ENCODE measurements at regions of chr1 and their contacts with region 1.

Region 1: DNA sequence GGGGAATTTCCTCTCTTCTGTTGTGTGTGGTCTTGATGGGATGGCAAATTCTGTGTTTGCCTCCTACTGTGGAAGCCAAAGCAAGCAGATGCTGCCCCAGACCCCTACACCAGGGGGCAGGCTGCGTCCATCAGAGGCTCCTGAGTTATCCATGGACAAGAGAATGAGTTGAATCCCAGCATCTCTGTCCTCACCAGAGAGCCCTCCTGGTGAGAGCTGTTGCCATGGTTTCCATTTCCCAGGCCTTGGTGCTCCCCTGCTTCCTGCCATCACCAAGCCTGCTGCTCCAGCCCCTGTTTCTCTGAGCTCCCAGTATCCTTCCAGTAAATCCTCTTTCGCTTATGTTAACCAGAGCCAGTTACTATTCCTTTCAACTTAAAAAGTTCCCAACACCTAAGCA is 20.4 kb upstream of the GNG12 start:
- DNase-seq: peak; percentile 54 to 59
- ATAC-seq: peak; percentile 58 to 86 (median 74)
- H3K4me3 ChIP-seq: no peak overlapping the region
- H3K27ac ChIP-seq: no peak overlapping the region
- H3K4me1 ChIP-seq: peaks cover 0 to 12% (median 9%) of the 10 kb centered on the region in 9 donors
- H3K27me3 ChIP-seq: no peaks in the 10 kb centered on the region
- CTCF ChIP-seq: peak; percentile 57 to 83 (median 76)

Region 2: DNA sequence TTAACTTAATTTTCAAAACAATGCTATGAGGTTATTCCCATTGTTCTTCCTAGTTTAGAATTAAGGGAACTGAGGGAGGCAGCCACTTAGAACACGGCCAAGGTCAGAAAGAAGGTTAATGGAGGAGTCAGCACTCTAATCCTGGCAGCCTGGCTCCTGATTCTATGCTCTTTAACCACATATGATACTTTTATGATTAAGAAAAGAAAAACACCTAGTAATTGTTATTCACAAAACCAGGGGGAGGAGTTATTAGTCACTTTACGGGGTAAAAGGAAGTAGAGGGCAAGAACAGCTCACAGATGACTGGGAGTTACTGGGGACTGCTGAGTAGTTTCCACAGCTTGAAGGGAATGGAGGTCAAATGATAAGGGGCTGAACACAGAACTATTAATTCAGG is 130.1 kb before region 1 on chr1:
- intact Hi-C with region 1: no loop called
- DNase-seq: peak in 1 of 2 donors; percentile 37
- ATAC-seq: peak; percentile 55 to 81 (median 80)
- H3K4me3 ChIP-seq: no peak overlapping the region
- H3K27ac ChIP-seq: peak overlapping the region in 9 of 10 donors; percentile 44 to 84 (median 71)
- H3K4me1 ChIP-seq: peaks cover 9 to 65% (median 43%) of the 10 kb centered on the region in 9 donors
- H3K27me3 ChIP-seq: no peaks in the 10 kb centered on the region
- CTCF ChIP-seq: no peak

Region 3: GRCh38 chr1:67766141-67766978 is 87.3 kb before region 1 on chr1:
- intact Hi-C with region 1: loop called in 4 of 10 experiments (anchors 5 kb)
- DNase-seq: peak; percentile 21 to 32
- ATAC-seq: peak; percentile 57 to 82 (median 67)
- H3K4me3 ChIP-seq: peak overlapping the region in 6 of 10 donors; percentile 23 to 36 (median 34)
- H3K27ac ChIP-seq: peak overlapping the region in 3 of 10 donors; percentile 14 to 56 (median 29)
- H3K4me1 ChIP-seq: peaks cover 0 to 21% (median 13%) of the 10 kb centered on the region in 9 donors
- H3K27me3 ChIP-seq: no peaks in the 10 kb centered on the region
- CTCF ChIP-seq: peak; percentile 64 to 81 (median 73)

Region 4: DNA sequence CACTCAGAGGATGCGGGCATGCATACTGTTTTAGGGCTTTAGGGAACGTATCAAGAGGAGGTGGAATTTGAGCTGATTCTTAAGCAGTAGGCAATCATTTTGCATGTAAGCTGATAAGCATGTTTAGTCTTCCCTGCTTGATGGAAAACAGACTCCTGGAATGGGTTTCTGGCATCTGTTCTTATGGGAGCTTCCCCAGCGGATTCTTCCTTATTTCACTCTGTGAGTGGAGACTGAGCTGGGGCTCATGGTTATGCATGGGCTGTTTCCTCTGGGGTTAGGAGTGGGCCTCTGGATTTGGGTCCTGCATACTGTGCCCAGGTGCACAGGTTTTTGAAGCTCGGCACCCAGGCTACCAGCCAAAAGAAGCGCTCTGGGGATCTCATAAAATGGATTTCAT is 103.4 kb after region 1 on chr1:
- intact Hi-C with region 1: loop called in 1 of 10 experiments (anchors 10 kb)
- DNase-seq: peak in 1 of 2 donors; percentile 34
- ATAC-seq: peak; percentile 38 to 85 (median 68)
- H3K4me3 ChIP-seq: no peak overlapping the region
- H3K27ac ChIP-seq: peak overlapping the region in 2 of 10 donors; percentile 3 to 40
- H3K4me1 ChIP-seq: peaks cover 0 to 22% (median 12%) of the 10 kb centered on the region in 9 donors
- H3K27me3 ChIP-seq: no peaks in the 10 kb centered on the region
- CTCF ChIP-seq: no peak

Region 5: DNA sequence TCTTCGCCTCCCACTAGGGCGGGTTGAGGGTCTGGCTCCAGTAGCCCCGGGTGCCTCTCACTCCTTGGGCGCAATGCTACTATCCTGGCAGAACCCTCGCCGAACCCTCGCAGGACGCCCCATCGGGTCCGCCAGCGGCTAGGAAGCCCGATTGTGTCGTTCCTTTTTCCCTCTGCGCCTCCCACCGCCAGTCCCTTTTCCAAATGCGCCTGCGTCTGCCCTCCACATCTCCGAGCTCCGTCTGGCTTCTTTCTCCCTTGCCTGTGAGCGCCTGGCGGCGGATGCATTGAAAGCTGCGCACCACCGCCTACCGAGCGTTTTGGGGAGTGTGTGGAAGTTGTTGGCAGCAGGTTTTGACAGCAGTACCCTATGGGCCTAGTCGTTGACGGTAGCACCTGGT is 197.8 kb after region 1 on chr1:
- intact Hi-C with region 1: loop called in 4 of 10 experiments (anchors 1 to 5 kb)
- DNase-seq: peak; percentile 45
- ATAC-seq: peak; percentile 67 to 91 (median 86)
- H3K4me3 ChIP-seq: peak overlapping the region; percentile 10 to 56 (median 48)
- H3K27ac ChIP-seq: peak overlapping the region in 3 of 10 donors; percentile 24 to 48 (median 45)
- H3K4me1 ChIP-seq: no peaks in the 10 kb centered on the region
- H3K27me3 ChIP-seq: peaks cover 0 to 36% (median 0%) of the 10 kb centered on the region in 7 donors
- CTCF ChIP-seq: peak in 7 of 9 donors; percentile 26 to 55 (median 32)

Region 6: DNA sequence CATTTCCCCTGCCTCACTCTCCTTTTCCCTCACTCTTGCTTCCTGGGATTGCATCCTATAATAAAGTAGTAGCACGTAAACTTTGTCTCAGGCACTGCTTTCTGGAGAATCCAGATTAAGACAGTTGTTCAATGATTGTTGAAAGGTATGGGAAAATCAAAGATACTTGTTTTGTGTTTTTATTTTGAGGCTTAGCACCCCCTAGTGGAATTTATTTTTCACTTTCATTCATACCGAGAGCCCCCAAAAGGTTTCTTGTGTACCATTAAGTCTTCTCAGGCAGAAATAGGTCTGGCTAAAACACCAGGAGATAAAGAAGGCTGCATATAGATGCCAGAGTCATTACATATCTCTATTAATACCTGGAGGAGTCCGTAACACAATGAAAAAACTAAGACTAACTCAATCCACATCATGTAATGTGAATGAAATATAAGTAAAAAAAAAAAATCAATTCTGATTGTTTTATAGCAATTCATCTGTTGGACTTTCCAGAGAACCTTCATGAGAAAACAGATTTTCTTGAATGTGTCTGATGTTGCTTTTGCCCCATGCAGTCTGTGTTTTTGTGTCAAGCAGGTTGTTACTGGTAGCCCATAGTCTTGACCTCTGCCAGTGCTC is 492.6 kb after region 1 on chr1:
- intact Hi-C with region 1: loop called in 5 of 10 experiments (anchors 5 to 10 kb)
- DNase-seq: no peak
- ATAC-seq: no peak
- H3K4me3 ChIP-seq: no peak overlapping the region
- H3K27ac ChIP-seq: no peak overlapping the region
- H3K4me1 ChIP-seq: peaks cover 0 to 7% (median 0%) of the 10 kb centered on the region in 9 donors
- H3K27me3 ChIP-seq: no peaks in the 10 kb centered on the region
- CTCF ChIP-seq: peak in 8 of 9 donors; percentile 30 to 68 (median 55)

Measured in heart right ventricle (tissue), 16 donors.